ENCODE measurements at regions of chr2 and their contacts with region 1.

Region 1: DNA sequence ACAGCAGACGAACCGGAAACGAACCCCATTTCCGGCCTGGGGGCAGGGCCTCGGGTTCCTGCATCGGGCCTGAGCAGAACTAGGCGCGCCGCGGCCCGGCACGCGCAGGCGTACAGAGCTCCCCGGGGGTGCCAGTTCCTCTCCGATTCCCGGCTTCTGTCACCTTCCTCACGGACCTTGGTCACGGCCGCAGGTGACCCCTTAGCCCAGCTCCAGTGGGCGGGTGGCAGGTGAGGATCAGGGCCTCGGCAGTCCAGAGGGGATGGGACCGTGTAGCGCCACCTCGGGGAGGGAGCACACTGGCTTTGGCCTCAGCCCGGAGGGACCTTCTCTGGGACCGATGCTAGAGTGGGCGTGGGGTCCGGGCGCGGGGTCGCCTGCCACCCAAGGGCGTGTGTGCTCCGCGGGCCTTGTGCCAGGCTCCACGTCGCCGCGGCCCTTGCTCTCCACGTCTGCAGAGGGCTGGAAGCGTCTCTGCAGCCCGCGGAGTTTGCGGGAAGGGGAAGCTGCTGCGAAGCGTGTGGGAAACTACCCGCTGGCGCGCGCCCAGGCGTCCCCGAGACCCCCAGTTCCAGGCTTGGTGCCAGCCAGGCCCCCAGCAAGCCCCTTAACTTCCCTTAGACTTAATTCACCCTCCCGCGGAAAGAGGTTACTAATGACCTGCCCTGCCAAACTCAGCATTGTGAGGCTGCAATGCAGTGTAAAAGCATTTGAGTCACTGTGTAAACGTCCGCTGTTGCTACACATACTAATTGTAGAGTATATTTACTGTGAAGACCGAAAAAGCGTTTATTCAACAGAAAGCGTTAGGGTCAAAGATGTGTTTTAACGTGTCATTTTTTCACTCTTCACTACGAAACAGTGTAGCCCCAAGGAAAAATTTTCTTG is at the start of gene TRAPPC12:
- DNase-seq: peak; percentile 89 to 95
- H3K4me3 ChIP-seq: peak within 1 kb of the TSS; percentile 70 to 94
- H3K27ac ChIP-seq: peak within 1 kb of the TSS; percentile 83 to 89
- H3K4me1 ChIP-seq: peaks cover 0 to 36% (median 24%) of the 10 kb centered on the region in 4 donors
- H3K27me3 ChIP-seq: no peaks in the 10 kb centered on the region
- CTCF ChIP-seq: peak in 1 of 2 experiments; percentile 24

Region 2: GRCh38 chr2:3536682-3537632 is 157.1 kb after region 1 on chr2:
- intact Hi-C with region 1: loop called (anchors 10 kb)
- DNase-seq: peak in 1 of 2 donors; percentile 79
- H3K4me3 ChIP-seq: peak overlapping the region; percentile 51 to 56
- H3K27ac ChIP-seq: peak overlapping the region; percentile 90 to 96
- H3K4me1 ChIP-seq: peaks cover 0 to 23% (median 17%) of the 10 kb centered on the region in 4 donors
- H3K27me3 ChIP-seq: no peaks in the 10 kb centered on the region
- CTCF ChIP-seq: peak; percentile 50 to 51